WTC11 (cell line): ENCODE measurements at regions of chr3 and their contacts with region 1.

Region 1: GRCh38 chr3:32238453-32239306 is at the start of gene CMTM8:
- DNase-seq: peak; percentile 63
- ATAC-seq: peak; percentile 82
- H3K4me3 Mint-ChIP-seq: peak within 1 kb of the TSS; percentile 80
- H3K27ac Mint-ChIP-seq: no peak within 1 kb of the TSS
- H3K4me1 Mint-ChIP-seq: peaks cover 22% of the 10 kb centered on the region
- H3K27me3 Mint-ChIP-seq: peaks cover 50% of the 10 kb centered on the region
- CTCF ChIP-seq: no peak
- total RNA-seq, gene CMTM8: 9.0 to 11.2 TPM (median 9.1 TPM) in 3 replicates

Region 2: DNA sequence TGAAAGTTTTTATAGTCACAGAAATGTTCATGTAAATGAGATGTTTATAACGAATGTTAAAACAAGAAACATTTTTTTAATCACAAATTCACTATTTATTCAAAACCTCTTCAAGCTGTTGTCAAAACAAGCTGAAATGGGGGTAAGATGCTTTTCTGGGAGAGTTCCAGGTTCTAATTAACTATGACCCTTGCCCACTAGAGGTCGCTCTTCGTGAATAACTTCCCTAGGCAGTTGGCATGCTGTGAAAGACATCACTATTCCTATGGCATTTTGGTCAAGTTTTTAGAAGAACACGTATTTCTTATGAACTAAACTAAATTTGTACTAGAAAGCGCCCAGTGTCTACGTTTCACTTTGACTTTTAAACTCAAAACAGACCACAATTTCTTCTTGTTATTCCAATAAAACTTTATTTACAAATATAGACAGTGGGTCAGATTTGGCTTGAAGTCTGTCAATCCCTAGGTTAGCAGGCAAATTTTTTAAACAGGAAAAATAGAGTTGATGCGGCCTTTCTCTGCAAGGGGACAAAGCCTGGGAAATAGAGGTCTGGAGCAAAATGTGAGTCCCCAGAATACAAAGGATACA is 63.0 kb before region 1 on chr3:
- CTCF ChIA-PET with region 1: interaction called, 11 read pairs
- POLR2A ChIA-PET with region 1: no interaction called
- DNase-seq: peak; percentile 46
- ATAC-seq: peak; percentile 32
- H3K4me3 Mint-ChIP-seq: no peak overlapping the region
- H3K27ac Mint-ChIP-seq: no peak overlapping the region
- H3K4me1 Mint-ChIP-seq: no peaks in the 10 kb centered on the region; the same call in 1 of the 2 replicates
- H3K27me3 Mint-ChIP-seq: no peaks in the 10 kb centered on the region; the same call in 1 of the 2 replicates
- CTCF ChIP-seq: peak; percentile 64

Region 3: GRCh38 chr3:32296256-32297204 is 57.9 kb after region 1 on chr3:
- CTCF ChIA-PET with region 1: interaction called, 10 read pairs
- POLR2A ChIA-PET with region 1: no interaction called
- DNase-seq: peak; percentile 72
- ATAC-seq: peak; percentile 95
- H3K4me3 Mint-ChIP-seq: no peak overlapping the region
- H3K27ac Mint-ChIP-seq: no peak overlapping the region
- H3K4me1 Mint-ChIP-seq: peaks cover 10% of the 10 kb centered on the region
- H3K27me3 Mint-ChIP-seq: no peaks in the 10 kb centered on the region
- CTCF ChIP-seq: peak; percentile 89